Natural killer cell (primary cell): ENCODE measurements at regions of chr14 and their contacts with region 1.

Region 1: GRCh38 chr14:68734231-68734775 is 58.6 kb downstream of the ZFP36L1 start:
- DNase-seq: peak; percentile 27 to 57
- ATAC-seq: peak; percentile 79 to 81 (median 79)
- H3K4me3 ChIP-seq: no peak overlapping the region
- H3K4me3 Mint-ChIP-seq: peak overlapping the region; percentile 73
- H3K27ac ChIP-seq: peak overlapping the region; percentile 72
- H3K27ac Mint-ChIP-seq: peak overlapping the region; percentile 81 to 85
- H3K4me1 ChIP-seq: peaks cover 37% of the 10 kb centered on the region
- H3K4me1 Mint-ChIP-seq: peaks cover 39 to 44% of the 10 kb centered on the region in 2 donors
- H3K27me3 ChIP-seq: no peaks in the 10 kb centered on the region
- H3K27me3 Mint-ChIP-seq: no peaks in the 10 kb centered on the region
- CTCF ChIP-seq: no peak

Region 2: DNA sequence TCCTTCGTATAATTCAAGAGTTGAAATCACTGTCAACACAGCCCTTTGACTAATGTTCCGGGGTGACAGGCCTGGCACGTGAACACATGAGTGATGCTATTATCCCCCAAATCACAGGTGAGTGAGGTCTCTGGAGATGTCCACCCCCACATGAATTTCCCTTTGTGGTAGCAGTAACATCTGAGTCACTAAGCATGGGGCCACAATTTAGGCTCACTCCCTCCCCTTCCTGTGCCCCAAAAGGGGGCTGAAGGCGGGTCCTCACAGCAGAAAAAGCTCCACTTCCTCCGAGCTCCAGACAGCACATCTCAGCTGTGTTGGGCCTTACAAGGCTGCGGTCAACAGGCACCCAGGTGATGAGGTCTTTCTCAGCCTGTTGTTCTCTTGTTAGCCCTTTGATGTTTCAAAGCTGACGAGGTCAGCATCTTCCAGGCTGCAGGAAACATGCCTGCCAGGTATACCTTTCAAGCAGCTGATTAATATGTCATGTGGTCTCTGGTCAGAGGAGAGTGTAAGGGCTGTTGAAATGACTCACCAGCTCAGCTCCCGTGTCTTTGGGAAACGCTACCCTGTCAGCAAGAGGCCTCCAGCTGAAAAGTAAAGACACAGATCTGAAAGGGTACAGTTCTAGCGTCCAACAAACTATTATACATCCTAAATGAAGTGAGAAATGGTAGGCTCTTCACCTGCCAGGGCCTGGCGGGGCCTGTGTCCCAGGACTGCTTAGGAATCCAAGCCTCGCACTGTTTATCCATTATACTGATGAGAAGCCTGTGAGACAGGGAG is 48.7 kb before region 1 on chr14:
- intact Hi-C with region 1: loop called (anchors 5 kb)
- DNase-seq: peak; percentile 66 to 91
- ATAC-seq: peak; percentile 86 to 88 (median 88)
- H3K4me3 ChIP-seq: no peak overlapping the region
- H3K4me3 Mint-ChIP-seq: peak overlapping the region; percentile 47
- H3K27ac ChIP-seq: peak overlapping the region; percentile 88
- H3K27ac Mint-ChIP-seq: peak overlapping the region; percentile 89 to 96
- H3K4me1 ChIP-seq: peaks cover 61% of the 10 kb centered on the region
- H3K4me1 Mint-ChIP-seq: peaks cover 32 to 45% of the 10 kb centered on the region in 2 donors
- H3K27me3 ChIP-seq: no peaks in the 10 kb centered on the region
- H3K27me3 Mint-ChIP-seq: no peaks in the 10 kb centered on the region
- CTCF ChIP-seq: no peak

Region 3: DNA sequence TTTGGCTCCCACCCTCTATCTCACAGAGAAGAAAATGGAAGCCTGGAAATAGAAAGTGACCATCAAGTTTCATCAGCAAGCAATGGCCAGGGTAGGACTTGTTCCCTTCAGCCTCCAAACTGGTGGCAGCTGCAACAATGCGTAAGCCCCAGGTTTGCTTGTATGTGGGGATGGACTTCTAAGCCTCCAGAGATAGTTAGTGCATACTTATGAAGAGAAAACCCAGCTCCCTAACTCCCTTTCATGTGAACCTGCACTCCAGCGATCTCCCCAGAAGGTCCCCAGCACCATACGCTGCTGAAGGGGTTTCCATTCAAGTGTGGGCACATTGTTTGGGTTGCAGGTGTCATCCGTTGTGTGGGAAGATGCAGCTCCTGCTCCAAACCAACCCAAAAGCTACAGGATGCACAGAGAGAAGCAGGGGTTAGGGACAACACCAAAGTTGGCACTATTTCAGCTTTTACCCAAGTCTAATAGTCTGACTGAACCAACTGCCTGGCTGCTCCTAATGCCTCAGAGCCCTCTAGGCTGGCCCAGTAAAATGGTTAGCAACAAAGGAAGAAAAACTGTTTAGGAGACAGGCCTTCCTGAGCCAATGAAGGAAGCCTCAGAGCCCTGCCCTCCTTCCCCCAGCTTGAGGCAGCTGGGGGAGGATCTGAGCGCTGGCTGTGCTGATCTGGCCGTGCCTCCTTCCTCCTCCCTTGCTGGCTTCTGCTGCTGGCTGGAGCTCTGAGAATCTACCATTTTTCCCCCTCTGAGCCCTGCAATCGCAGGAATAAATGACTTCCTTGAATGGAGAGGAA is 46.3 kb after region 1 on chr14:
- intact Hi-C with region 1: loop called (anchors 2 kb)
- DNase-seq: peak in 1 of 2 donors; percentile 68
- ATAC-seq: peak; percentile 25 to 56 (median 36)
- H3K4me3 ChIP-seq: peak overlapping the region; percentile 0
- H3K4me3 Mint-ChIP-seq: peak overlapping the region; percentile 91
- H3K27ac ChIP-seq: peak overlapping the region; percentile 88
- H3K27ac Mint-ChIP-seq: peak overlapping the region; percentile 94 to 95
- H3K4me1 ChIP-seq: peaks cover 67% of the 10 kb centered on the region
- H3K4me1 Mint-ChIP-seq: peaks cover 59 to 63% of the 10 kb centered on the region in 2 donors
- H3K27me3 ChIP-seq: no peaks in the 10 kb centered on the region
- H3K27me3 Mint-ChIP-seq: no peaks in the 10 kb centered on the region
- CTCF ChIP-seq: no peak

Region 4: DNA sequence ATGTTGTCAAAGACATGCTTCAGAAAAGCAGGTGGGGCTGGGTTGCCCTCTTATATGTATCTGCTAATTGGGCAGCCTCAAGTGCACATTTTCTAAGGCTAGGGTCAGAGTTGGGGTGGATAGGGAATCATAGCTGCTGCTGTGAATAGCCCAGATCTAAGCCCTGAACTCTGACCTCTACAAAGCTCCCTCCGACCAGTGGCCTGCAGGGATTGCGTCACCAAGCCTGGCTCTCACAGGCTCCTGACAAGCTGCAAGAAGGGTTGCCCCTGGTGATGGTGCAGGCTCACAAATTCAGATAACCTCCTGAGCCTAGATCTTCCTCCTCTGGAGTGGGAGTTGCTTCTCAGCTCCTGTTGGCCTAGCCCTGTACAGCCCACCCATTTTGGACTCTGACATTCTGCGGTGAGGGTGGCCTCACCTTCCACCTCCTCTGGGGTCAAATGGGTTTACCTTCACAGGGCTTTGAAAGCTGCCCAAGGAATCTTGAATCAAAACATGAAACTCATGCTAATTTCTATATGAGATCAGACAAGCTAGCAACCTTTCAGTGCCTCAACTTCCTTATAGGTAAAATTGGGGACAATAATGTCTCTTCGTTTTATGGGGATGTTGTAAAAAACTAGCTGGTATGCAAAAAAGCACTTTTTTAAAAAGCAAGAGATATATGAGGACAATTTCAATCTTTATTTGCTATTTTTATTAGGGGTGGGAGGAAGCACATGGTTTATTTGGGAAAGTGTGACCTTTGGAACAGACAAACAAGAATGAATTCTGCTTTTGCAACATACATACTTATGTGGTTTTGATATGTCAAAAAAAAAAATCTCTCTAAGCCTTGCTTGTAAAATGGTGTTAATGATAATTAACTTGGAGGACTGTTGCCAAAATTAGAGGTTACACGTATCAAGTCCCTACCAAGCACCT is 872.2 kb after region 1 on chr14:
- intact Hi-C with region 1: no loop called
- DNase-seq: no peak
- ATAC-seq: no peak
- H3K4me3 ChIP-seq: no peak overlapping the region
- H3K4me3 Mint-ChIP-seq: no peak overlapping the region
- H3K27ac ChIP-seq: no peak overlapping the region
- H3K27ac Mint-ChIP-seq: no peak overlapping the region
- H3K4me1 ChIP-seq: peaks cover 14% of the 10 kb centered on the region
- H3K4me1 Mint-ChIP-seq: peaks cover 7 to 9% of the 10 kb centered on the region in 2 donors
- H3K27me3 ChIP-seq: no peaks in the 10 kb centered on the region
- H3K27me3 Mint-ChIP-seq: no peaks in the 10 kb centered on the region
- CTCF ChIP-seq: no peak